Aorta (tissue), 5 donors: ENCODE measurements at regions of chr12 and their contacts with region 1.

Region 1: DNA sequence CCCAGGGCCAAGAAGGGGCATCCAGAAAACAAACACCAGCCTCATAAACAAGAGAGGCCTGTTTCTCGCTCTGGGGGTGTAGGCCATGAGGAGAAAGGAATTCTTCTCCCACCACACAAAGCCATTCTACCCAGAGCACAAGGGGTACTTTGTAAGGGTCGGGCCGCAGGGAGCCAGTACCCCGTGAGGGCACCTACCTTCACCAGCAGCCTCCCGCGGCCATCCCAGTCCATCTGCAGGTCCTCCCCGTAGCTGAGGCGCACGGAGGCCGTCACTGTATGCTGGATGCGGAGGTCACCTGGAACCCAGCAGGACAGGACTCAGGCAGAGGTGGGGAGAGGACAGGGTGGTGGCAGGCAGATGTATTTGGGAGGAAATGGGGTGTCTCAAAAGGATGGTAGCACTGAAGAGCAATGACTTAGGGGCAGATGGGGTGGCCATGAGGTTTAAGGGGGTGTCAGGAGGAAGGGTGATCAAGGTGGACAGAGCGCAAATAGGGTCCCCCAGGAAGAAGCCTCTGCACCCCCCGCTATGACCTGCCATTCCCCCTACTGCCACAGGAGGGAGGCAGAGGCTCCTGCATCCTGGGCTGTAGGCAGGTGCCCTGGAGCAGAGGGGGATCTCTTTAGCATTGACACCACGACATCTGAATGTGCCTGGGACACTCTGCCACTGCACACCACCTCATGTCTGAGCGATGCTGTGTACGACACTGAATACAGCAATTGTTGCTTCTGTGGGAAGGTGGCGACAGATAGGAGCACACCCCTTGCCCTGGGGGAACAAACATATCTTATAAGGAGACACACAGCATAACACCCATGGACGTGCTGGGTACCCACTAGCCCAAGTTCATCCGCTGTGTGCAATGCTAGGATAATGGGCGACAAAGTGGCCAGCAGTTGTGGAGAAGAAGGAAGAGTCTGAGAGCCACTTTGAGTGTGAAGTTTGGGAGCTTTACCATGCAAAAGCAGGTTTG is 61.4 kb downstream of the VWF start:
- DNase-seq: peak in 1 of 2 donors; percentile 66
- ATAC-seq: peak; percentile 68
- H3K4me3 ChIP-seq: no peak overlapping the region
- H3K27ac ChIP-seq: no peak overlapping the region
- H3K4me1 ChIP-seq: no peaks in the 10 kb centered on the region
- H3K27me3 ChIP-seq: no peaks in the 10 kb centered on the region

Region 2: DNA sequence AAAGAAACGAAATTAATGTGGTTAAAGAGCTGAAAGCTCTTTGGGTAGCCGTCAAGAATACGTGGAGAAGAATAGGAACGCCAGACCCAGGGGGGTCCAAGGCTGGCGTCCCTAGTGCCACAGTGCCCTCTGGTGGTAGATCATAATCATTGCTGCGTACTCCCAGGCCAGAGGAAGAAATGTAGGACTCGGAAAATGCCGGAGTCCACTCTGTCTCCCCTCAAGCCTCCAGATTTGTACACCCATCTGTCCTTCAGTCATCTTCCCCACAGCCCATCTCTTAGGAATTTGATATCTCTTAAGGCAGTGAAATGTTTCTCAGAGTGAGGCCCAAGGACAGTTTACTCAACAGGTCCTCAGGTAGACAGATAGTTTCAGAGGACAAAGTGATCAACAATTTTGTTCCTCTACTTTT is 222.0 kb after region 1 on chr12:
- intact Hi-C with region 1: loop called (anchors 1 to 2 kb)
- DNase-seq: peak in 1 of 2 donors; percentile 78
- ATAC-seq: peak; percentile 90
- H3K4me3 ChIP-seq: no peak overlapping the region
- H3K27ac ChIP-seq: no peak overlapping the region
- H3K4me1 ChIP-seq: no peaks in the 10 kb centered on the region
- H3K27me3 ChIP-seq: no peaks in the 10 kb centered on the region